IMR-90 (cell line): ENCODE measurements at regions of chr11 and their contacts with region 1.

Region 1: DNA sequence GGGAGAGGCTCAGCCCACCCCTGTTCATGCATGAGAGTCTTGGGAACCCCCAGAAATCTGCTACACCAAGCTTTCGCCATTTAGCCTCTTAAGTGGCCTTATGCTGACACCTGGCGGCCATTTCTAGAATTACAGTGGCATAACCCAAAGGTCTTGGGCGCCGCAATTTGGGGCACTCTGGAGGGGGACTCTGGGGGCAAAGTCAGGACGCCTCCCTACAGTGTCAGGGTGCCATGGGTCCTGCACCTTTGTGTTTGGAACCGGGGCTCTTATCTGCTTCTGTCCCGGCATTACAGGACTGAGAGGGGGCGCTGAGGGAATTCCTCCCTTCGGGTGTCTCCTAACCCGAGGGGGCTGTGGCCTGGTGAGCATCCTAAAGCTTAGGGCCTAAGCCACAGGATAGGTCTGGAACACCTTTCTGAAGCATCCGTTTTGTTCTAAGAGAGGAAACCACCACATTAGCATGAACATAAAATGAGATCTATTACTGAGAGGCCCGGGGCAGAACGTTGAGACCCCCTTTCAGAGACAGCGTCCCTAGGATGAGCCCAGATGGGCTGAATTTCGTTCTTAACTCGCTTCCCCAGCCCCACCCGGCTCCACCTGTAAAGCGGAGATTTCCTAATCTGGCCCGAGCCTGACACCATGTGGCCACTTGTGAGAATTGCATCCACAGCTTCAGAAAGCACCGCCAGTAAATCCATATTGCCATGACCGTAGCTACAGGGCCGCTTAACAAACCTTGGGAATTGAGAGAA is 9.3 kb downstream of the INS start:
- DNase-seq: peak; percentile 54
- ATAC-seq: peak; percentile 76
- H3K4me3 ChIP-seq: no peak overlapping the region
- H3K27ac ChIP-seq: no peak overlapping the region
- H3K4me1 ChIP-seq: no peaks in the 10 kb centered on the region
- H3K27me3 ChIP-seq: peaks cover 41% of the 10 kb centered on the region
- CTCF ChIP-seq: peak; percentile 78
- POLR2A ChIP-seq: no peak
- RAD21 ChIP-seq: peak; percentile 77

Region 2: GRCh38 chr11:1694064-1694845 is 457.4 kb before region 1 on chr11:
- CTCF ChIA-PET with region 1: interaction called, 11 read pairs
- POLR2A ChIA-PET with region 1: no interaction called
- dilution Hi-C with region 1: no loop called
- in situ Hi-C with region 1: loop called (anchors 5 kb)
- intact Hi-C with region 1: loop called (anchors 1 kb)
- DNase-seq: peak; percentile 61
- ATAC-seq: peak; percentile 97
- H3K4me3 ChIP-seq: no peak overlapping the region
- H3K27ac ChIP-seq: no peak overlapping the region
- H3K4me1 ChIP-seq: peaks cover 1% of the 10 kb centered on the region; the same call in 1 of the 2 replicates
- H3K27me3 ChIP-seq: peaks cover 55% of the 10 kb centered on the region
- CTCF ChIP-seq: peak; percentile 94
- POLR2A ChIP-seq: no peak
- RAD21 ChIP-seq: peak; percentile 93

Region 3: GRCh38 chr11:1837171-1838076 is 314.3 kb before region 1 on chr11:
- CTCF ChIA-PET with region 1: interaction called, 10 read pairs
- POLR2A ChIA-PET with region 1: no interaction called
- dilution Hi-C with region 1: no loop called
- in situ Hi-C with region 1: no loop called
- intact Hi-C with region 1: loop called (anchors 1 kb)
- DNase-seq: peak; percentile 28
- ATAC-seq: peak; percentile 91
- H3K4me3 ChIP-seq: no peak overlapping the region
- H3K27ac ChIP-seq: no peak overlapping the region
- H3K4me1 ChIP-seq: no peaks in the 10 kb centered on the region
- H3K27me3 ChIP-seq: peaks cover 9% of the 10 kb centered on the region; the same call in 1 of the 2 replicates
- CTCF ChIP-seq: peak; percentile 85
- POLR2A ChIP-seq: no peak
- RAD21 ChIP-seq: peak; percentile 87

Region 4: GRCh38 chr11:2027708-2028107 is 124.0 kb before region 1 on chr11:
- CTCF ChIA-PET with region 1: interaction called, 11 read pairs
- POLR2A ChIA-PET with region 1: no interaction called
- dilution Hi-C with region 1: no loop called
- in situ Hi-C with region 1: no loop called
- intact Hi-C with region 1: no loop called
- DNase-seq: no peak
- ATAC-seq: no peak
- H3K4me3 ChIP-seq: no peak overlapping the region
- H3K27ac ChIP-seq: no peak overlapping the region
- H3K4me1 ChIP-seq: no peaks in the 10 kb centered on the region
- H3K27me3 ChIP-seq: no peaks in the 10 kb centered on the region
- CTCF ChIP-seq: no peak
- POLR2A ChIP-seq: no peak
- RAD21 ChIP-seq: no peak